Thyroid gland (tissue), 4 donors: ENCODE measurements at regions of chr14 and their contacts with region 1.

Region 1: DNA sequence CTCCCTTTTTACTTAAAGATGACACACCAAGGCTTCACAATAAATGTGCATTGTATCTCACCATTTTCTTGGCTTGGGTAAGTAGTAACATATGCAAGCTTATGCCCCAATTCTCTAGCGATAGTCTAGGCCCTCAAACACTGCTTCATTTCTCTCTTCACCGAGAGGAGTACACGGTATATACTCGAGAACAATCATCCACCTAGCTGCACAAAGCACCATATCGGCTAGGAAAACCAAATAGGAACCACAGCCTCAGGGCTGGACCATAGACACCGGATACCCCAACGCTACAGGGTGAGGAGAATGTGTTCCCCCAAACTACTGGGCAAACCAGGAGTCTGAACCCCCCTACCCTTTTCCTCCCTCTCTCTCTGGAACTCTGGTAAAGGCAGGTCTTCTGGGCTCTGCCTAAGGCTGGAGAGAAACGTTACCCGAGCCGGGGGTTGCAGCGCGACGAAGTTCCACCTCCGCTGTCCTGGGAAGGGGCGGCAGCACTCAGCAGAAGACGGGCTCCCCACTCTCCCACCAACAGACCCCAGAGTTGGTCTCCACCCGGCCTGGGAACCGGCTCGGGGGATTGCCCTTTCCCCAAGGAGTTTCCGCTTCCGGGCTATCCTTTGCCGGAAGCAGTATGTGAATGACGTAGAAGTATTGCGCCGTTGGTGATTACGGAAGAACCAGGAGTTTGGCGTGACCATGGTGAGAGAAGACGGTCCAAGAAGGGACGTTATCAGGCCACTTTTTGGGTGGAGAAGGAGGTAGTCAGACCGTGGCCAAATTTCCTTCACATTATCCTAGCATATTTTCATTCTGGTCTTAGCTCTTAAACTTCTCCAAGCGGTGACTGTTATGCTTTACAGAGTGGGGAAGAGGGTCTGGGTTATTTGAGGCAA is at the starts of genes AREL1 and FCF1:
- DNase-seq: peak; percentile 73 to 74
- H3K4me3 ChIP-seq: peak within 1 kb of the TSS; percentile 23 to 69 (median 34)
- H3K27ac ChIP-seq: peak within 1 kb of the TSS; percentile 10 to 83 (median 51)
- H3K4me1 ChIP-seq: peaks cover 15 to 37% of the 10 kb centered on the region in 2 donors
- H3K27me3 ChIP-seq: no peaks in the 10 kb centered on the region
- CTCF ChIP-seq: peak in 2 of 6 experiments; percentile 8 to 16
- POLR2A ChIP-seq: peak in 1 of 2 donors; percentile 62
- total RNA-seq, gene AREL1: 45.6 to 61.1 (median 50.4) TPM
- total RNA-seq, gene FCF1: 35.4 to 51.2 (median 39.3) TPM

Region 2: GRCh38 chr14:74501135-74501614 is 211.6 kb before region 1 on chr14:
- intact Hi-C with region 1: loop called (anchors 5 kb)
- DNase-seq: peak; percentile 95 to 97
- H3K4me3 ChIP-seq: no peak overlapping the region
- H3K27ac ChIP-seq: peak overlapping the region; percentile 30 to 63 (median 54)
- H3K4me1 ChIP-seq: peaks cover 7 to 9% of the 10 kb centered on the region in 2 donors
- H3K27me3 ChIP-seq: no peaks in the 10 kb centered on the region
- CTCF ChIP-seq: peak; percentile 58 to 94 (median 84)
- POLR2A ChIP-seq: peak in 1 of 2 donors; percentile 38

Region 3: GRCh38 chr14:74754157-74754556 is 41.4 kb after region 1 on chr14:
- intact Hi-C with region 1: no loop called
- DNase-seq: no peak
- H3K4me3 ChIP-seq: no peak overlapping the region
- H3K27ac ChIP-seq: no peak overlapping the region
- H3K4me1 ChIP-seq: no peaks in the 10 kb centered on the region
- H3K27me3 ChIP-seq: no peaks in the 10 kb centered on the region
- CTCF ChIP-seq: no peak
- POLR2A ChIP-seq: no peak

Region 4: DNA sequence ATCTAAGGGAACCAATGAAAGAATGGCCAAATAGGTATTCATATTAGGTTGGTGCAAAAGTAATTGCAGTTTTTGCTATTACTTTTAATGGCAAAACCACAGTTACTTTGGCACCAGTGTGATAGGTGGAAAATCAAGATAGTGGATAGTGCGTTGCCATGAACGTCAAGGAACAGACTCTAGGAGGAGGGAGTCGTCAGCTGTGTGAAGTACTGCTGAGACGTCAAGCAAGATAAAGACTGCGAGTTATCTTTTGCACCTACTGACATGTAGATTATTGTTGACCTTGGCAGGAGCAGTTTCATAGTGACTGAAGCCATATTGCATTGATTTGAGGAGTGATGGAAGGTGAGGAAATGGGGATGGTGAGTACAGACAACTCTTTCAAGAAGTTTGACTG is 58.7 kb after region 1 on chr14:
- intact Hi-C with region 1: no loop called
- DNase-seq: no peak
- H3K4me3 ChIP-seq: no peak overlapping the region
- H3K27ac ChIP-seq: no peak overlapping the region
- H3K4me1 ChIP-seq: peaks cover 15% of the 10 kb centered on the region in 2 donors
- H3K27me3 ChIP-seq: no peaks in the 10 kb centered on the region
- CTCF ChIP-seq: no peak
- POLR2A ChIP-seq: no peak